OCI-LY7 (cell line): ENCODE measurements at regions of chr22 and their contacts with region 1.

Region 1: DNA sequence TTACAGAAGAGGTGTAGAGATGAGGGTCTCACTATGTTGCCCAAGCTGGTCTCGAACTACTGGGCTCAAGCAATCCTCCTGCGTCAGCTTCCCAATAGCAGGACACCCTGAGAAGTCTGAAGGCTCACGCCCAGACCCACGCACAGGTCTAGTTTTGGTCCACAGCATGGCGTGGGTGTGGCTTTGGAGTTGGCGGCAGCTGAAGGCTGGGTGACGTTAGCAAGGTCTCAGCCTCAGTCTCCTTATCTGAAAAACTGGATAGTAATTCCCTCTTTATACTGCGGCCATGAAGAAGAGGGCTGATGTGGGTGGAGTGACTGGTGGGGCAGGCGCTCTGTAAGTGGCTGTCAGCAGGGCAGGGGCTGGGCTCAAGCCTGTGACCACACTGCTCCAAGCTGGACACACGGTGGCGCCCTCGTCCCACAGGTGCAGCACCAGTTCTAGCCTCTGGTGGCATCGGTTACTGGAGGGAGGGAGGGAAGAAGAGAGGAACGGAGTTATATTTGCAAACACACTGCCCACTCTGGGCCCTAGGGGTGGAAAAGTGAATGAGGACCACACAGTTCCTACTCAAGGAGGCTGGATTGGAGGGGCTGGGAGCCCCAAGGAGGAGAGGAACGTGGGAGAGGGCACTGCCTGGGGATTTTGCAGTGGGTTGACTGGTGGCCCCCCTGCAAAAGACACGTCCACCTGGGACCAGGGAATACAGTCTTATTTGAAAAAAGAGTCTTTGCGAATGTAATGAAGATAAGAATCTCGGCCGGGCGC is 19.6 kb upstream of the CARD10 start:
- DNase-seq: peak; percentile 92
- H3K4me3 ChIP-seq: no peak overlapping the region
- H3K27ac ChIP-seq: no peak overlapping the region
- H3K4me1 ChIP-seq: peaks cover 26% of the 10 kb centered on the region
- CTCF ChIP-seq: peak; percentile 97

Region 2: GRCh38 chr22:37472418-37473006 is 66.3 kb before region 1 on chr22:
- CTCF ChIA-PET with region 1: no interaction called
- POLR2A ChIA-PET with region 1: no interaction called
- intact Hi-C with region 1: no loop called
- DNase-seq: peak; percentile 55
- H3K4me3 ChIP-seq: no peak overlapping the region
- H3K27ac ChIP-seq: peak overlapping the region; percentile 63
- H3K4me1 ChIP-seq: peaks cover 52% of the 10 kb centered on the region
- CTCF ChIP-seq: peak; percentile 87

Region 3: GRCh38 chr22:37498289-37498909 is 40.4 kb before region 1 on chr22:
- CTCF ChIA-PET with region 1: no interaction called
- POLR2A ChIA-PET with region 1: no interaction called
- intact Hi-C with region 1: no loop called
- DNase-seq: peak; percentile 88
- H3K4me3 ChIP-seq: no peak overlapping the region
- H3K27ac ChIP-seq: no peak overlapping the region
- H3K4me1 ChIP-seq: peaks cover 24% of the 10 kb centered on the region
- CTCF ChIP-seq: peak; percentile 83

Region 4: GRCh38 chr22:37591823-37592404 is 53.1 kb after region 1 on chr22:
- CTCF ChIA-PET with region 1: interaction called, 3 read pairs
- POLR2A ChIA-PET with region 1: interaction called, 7 read pairs
- intact Hi-C with region 1: loop called (anchors 1 kb)
- DNase-seq: no peak
- H3K4me3 ChIP-seq: peak overlapping the region; percentile 64
- H3K27ac ChIP-seq: peak overlapping the region; percentile 2
- H3K4me1 ChIP-seq: no peaks in the 10 kb centered on the region
- CTCF ChIP-seq: no peak

Region 5: DNA sequence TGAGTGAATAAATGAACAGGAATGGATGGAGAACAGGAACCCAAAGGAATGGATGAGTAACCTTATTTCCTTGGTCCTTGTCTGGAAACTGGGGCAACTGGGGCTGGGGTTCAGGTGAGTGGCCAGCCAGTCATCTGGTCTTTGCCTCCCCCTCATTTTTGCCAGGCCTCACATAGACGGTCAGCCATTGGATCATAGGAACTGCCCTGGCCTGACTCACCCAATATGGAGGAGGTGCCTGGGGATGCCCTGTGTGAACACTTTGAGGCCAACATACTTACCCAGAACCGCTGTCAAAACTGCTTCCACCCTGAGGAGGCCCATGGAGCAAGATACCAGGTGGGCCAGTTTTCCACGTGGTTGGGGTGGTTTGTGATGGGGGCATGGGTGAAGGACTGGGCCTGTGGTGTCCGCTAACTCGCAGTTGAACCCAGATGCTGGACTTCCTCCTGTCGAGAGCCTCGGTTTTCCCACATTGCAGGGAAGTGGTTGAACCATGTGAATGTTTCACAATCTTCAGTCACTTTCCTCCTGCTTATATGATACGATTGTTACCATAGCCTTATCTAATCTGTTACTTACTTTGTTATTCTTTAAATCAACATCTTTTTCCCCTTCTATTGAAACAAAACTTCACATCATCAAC is 162.5 kb after region 1 on chr22:
- CTCF ChIA-PET with region 1: no interaction called
- POLR2A ChIA-PET with region 1: no interaction called
- intact Hi-C with region 1: no loop called
- DNase-seq: no peak
- H3K4me3 ChIP-seq: no peak overlapping the region
- H3K27ac ChIP-seq: no peak overlapping the region
- H3K4me1 ChIP-seq: peaks cover 7% of the 10 kb centered on the region
- CTCF ChIP-seq: no peak